Mammary epithelial cell (primary cell): ENCODE measurements at regions of chr10 and their contacts with region 1.

Region 1: GRCh38 chr10:47224546-47225218 is 75.3 kb upstream of the GDF10 start:
- DNase-seq: no peak
- H3K4me3 ChIP-seq: no peak overlapping the region
- H3K27ac ChIP-seq: no peak overlapping the region
- H3K4me1 ChIP-seq: no peaks in the 10 kb centered on the region
- H3K27me3 ChIP-seq: no peaks in the 10 kb centered on the region
- CTCF ChIP-seq: no peak

Region 2: DNA sequence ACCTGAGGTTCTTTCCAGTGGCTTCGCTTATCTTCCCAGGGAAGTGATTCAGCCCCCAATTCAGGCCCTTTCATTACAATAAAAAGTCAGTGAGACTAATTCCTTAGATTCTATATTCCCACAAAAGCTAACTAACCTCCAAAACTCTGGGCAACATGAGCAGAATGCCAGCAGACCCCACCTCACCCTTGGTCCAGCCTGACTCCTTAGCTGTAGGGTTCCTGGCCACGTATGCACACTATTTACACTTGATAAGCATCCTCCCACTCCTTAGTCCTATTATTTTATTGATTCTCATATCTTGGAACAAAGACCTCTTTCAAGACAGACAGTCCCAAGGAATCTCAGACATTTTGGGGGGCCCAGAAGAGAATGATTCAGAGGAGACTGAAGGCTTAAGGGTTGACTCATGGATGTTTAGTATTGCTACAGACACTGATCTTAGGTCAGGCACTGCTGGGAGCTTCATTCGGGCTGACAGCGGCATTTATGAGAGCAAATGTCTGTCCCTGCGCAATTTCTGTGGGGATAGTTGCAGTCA is 87.3 kb before region 1 on chr10:
- CTCF ChIA-PET with region 1: no interaction called
- dilution Hi-C with region 1: no loop called
- in situ Hi-C with region 1: no loop called
- intact Hi-C with region 1: no loop called
- DNase-seq: peak; percentile 75
- H3K4me3 ChIP-seq: no peak overlapping the region
- H3K27ac ChIP-seq: no peak overlapping the region
- H3K4me1 ChIP-seq: peaks cover 16% of the 10 kb centered on the region
- H3K27me3 ChIP-seq: no peaks in the 10 kb centered on the region
- CTCF ChIP-seq: no peak

Region 3: GRCh38 chr10:47277352-47278151 is 52.9 kb after region 1 on chr10:
- CTCF ChIA-PET with region 1: no interaction called
- dilution Hi-C with region 1: loop called (anchors 5 kb)
- in situ Hi-C with region 1: no loop called
- intact Hi-C with region 1: no loop called
- DNase-seq: peak; percentile 66
- H3K4me3 ChIP-seq: no peak overlapping the region
- H3K27ac ChIP-seq: no peak overlapping the region
- H3K4me1 ChIP-seq: peaks cover 9% of the 10 kb centered on the region
- H3K27me3 ChIP-seq: peaks cover 2% of the 10 kb centered on the region
- CTCF ChIP-seq: no peak